Mucosa of descending colon (tissue), 3 donors: ENCODE measurements at regions of chr9 and their contacts with region 1.

Region 1: GRCh38 chr9:109520478-109521132 is 22.5 kb upstream of the PTPN3 start:
- DNase-seq: peak in 2 of 3 donors; percentile 44 to 86
- ATAC-seq: peak; percentile 94
- H3K4me3 ChIP-seq: no peak overlapping the region
- H3K4me1 ChIP-seq: no peaks in the 10 kb centered on the region
- CTCF ChIP-seq: peak; percentile 69

Region 2: DNA sequence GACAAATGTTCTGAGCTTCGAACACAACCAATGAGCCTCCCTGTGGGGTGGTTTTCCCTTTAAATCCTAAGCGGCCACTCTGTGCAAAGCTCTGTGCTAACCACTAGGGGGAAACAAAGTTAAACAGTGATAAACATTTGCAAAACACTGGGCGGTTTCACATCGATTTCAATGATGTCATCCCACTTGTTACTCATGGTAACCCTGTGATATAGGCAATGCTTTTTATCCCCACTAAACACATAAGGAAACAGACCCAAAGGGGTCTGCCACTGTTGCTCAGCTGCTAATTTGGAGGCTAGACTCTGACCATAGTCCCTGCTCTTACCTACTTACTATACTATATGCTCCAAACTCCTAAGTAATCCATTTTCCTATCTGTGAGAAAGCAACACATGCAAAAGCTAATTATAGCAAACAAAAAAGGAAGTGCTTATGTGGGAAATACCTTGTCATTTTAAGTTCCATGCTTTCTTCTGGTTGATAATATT is 79.8 kb before region 1 on chr9:
- intact Hi-C with region 1: loop called in 1 of 2 experiments (anchors 5 kb)
- DNase-seq: peak in 1 of 3 donors; percentile 63
- ATAC-seq: peak; percentile 92
- H3K4me3 ChIP-seq: no peak overlapping the region
- H3K4me1 ChIP-seq: no peaks in the 10 kb centered on the region
- CTCF ChIP-seq: peak; percentile 39

Region 3: GRCh38 chr9:109733690-109734089 is 213.1 kb after region 1 on chr9:
- intact Hi-C with region 1: no loop called
- DNase-seq: no peak
- ATAC-seq: no peak
- H3K4me3 ChIP-seq: no peak overlapping the region
- H3K4me1 ChIP-seq: no peaks in the 10 kb centered on the region
- CTCF ChIP-seq: no peak